ENCODE measurements at regions of chr19 and their contacts with region 1.

Region 1: GRCh38 chr19:18160971-18161635 is 8.1 kb downstream of the PIK3R2 start:
- DNase-seq: peak; percentile 80
- H3K4me3 Mint-ChIP-seq: peak overlapping the region; percentile 72
- H3K27ac Mint-ChIP-seq: no peak overlapping the region
- H3K4me1 Mint-ChIP-seq: peaks cover 5% of the 10 kb centered on the region
- H3K27me3 Mint-ChIP-seq: no peaks in the 10 kb centered on the region

Region 2: GRCh38 chr19:18173572-18174288 is 12.6 kb after region 1 on chr19 and contains the start of gene IFI30:
- intact Hi-C with region 1: loop called (anchors 1 kb)
- DNase-seq: peak; percentile 65
- H3K4me3 Mint-ChIP-seq: peak within 1 kb of the TSS; percentile 91
- H3K27ac Mint-ChIP-seq: peak within 1 kb of the TSS; percentile 72
- H3K4me1 Mint-ChIP-seq: peaks cover 27% of the 10 kb centered on the region
- H3K27me3 Mint-ChIP-seq: peaks cover 3% of the 10 kb centered on the region
- total RNA-seq, gene IFI30: 45.3 and 49.9 TPM in 2 replicates

Region 3: DNA sequence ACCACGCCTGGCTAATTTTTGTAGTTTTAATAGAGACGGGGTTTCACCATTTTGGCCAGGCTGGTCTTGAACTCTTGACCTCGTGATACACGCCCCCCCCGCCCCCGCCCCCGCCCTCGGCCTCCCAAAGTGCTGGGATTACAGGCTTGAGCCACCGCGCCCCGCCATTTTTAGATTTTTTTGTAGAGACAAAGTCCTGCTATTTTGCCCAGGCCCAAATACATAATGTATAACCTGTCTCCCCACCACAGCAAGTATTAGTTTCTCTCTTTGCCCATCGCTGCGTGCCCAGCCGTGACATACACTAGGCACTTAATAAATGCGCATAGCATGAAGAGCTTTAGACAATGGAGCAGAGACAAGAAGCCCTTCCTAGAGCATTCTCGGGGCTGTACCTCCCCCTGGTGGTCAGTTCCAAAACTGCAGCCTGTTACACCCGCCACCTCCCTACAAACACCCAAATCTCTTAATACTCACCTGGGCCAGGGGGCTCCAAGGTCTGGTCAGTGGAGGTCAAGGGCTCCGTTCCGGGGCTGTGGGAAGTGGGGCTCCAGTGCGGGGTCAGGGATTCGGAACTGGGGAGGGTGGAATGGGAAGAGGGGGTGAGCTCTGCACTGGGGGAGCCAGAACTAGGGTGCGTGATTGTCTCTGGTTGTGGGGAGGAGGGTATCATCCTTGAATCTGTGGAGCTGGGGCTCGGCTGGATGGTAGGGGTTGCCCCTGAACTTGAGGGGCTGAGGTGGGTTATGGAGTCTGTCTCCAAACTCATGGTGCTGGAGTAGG is 90.7 kb after region 1 on chr19:
- intact Hi-C with region 1: loop called (anchors 5 kb)
- DNase-seq: peak; percentile 66
- H3K4me3 Mint-ChIP-seq: no peak overlapping the region
- H3K27ac Mint-ChIP-seq: peak overlapping the region; percentile 18
- H3K4me1 Mint-ChIP-seq: no peaks in the 10 kb centered on the region
- H3K27me3 Mint-ChIP-seq: peaks cover 16% of the 10 kb centered on the region

Region 4: GRCh38 chr19:18322759-18323460 is 161.8 kb after region 1 on chr19 and contains the start of gene LSM4:
- intact Hi-C with region 1: loop called (anchors 1 kb)
- DNase-seq: peak; percentile 99
- H3K4me3 Mint-ChIP-seq: peak within 1 kb of the TSS; percentile 95
- H3K27ac Mint-ChIP-seq: peak within 1 kb of the TSS; percentile 93
- H3K4me1 Mint-ChIP-seq: peaks cover 53% of the 10 kb centered on the region
- H3K27me3 Mint-ChIP-seq: no peaks in the 10 kb centered on the region
- total RNA-seq, gene LSM4: 198 and 200 TPM in 2 replicates